Panc1 (cell line): ENCODE measurements at regions of chr9 and their contacts with region 1.

Region 1: GRCh38 chr9:21789541-21790037 is 12.8 kb upstream of the MTAP start:
- DNase-seq: peak; percentile 75
- ATAC-seq: peak; percentile 99
- H3K4me3 ChIP-seq: peak overlapping the region; percentile 18 to 23; a peak in 3 of 4 replicates
- H3K27ac ChIP-seq: peak overlapping the region; percentile 86
- H3K4me1 ChIP-seq: peaks cover 11% of the 10 kb centered on the region
- H3K27me3 ChIP-seq: no peaks in the 10 kb centered on the region
- CTCF ChIP-seq: peak; percentile 72; the same call in 1 of the 2 replicates

Region 2: DNA sequence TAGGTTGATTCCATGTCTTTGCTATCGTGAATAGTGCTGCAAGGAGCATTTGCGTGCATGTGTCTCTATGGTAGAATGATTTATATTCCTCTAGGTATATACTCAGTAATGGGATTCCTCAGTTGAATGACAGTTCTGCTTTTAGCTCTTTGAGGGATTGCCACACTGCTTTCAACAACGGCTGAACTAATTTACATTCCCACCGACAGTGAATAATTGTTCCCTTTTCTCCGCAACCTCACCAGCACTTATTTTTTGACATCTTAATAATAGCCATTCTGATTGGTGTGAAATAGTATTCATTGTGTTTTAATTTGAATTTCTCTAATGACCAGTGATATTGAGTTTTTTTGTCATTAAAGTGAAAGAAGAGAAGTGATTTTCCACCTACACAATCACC is 502.9 kb before region 1 on chr9:
- CTCF ChIA-PET with region 1: no interaction called
- POLR2A ChIA-PET with region 1: no interaction called
- in situ Hi-C with region 1: no loop called
- intact Hi-C with region 1: no loop called
- DNase-seq: no peak
- ATAC-seq: no peak
- H3K4me3 ChIP-seq: no peak overlapping the region
- H3K27ac ChIP-seq: no peak overlapping the region
- H3K4me1 ChIP-seq: no peaks in the 10 kb centered on the region
- H3K27me3 ChIP-seq: no peaks in the 10 kb centered on the region
- CTCF ChIP-seq: no peak

Region 3: GRCh38 chr9:21317956-21318923 is 471.3 kb before region 1 on chr9:
- CTCF ChIA-PET with region 1: interaction called, 8 read pairs
- POLR2A ChIA-PET with region 1: no interaction called
- in situ Hi-C with region 1: no loop called
- intact Hi-C with region 1: loop called (anchors 10 kb)
- DNase-seq: no peak
- ATAC-seq: no peak
- H3K4me3 ChIP-seq: no peak overlapping the region
- H3K27ac ChIP-seq: no peak overlapping the region
- H3K4me1 ChIP-seq: no peaks in the 10 kb centered on the region
- H3K27me3 ChIP-seq: no peaks in the 10 kb centered on the region
- CTCF ChIP-seq: peak; percentile 36; the same call in 1 of the 2 replicates

Region 4: DNA sequence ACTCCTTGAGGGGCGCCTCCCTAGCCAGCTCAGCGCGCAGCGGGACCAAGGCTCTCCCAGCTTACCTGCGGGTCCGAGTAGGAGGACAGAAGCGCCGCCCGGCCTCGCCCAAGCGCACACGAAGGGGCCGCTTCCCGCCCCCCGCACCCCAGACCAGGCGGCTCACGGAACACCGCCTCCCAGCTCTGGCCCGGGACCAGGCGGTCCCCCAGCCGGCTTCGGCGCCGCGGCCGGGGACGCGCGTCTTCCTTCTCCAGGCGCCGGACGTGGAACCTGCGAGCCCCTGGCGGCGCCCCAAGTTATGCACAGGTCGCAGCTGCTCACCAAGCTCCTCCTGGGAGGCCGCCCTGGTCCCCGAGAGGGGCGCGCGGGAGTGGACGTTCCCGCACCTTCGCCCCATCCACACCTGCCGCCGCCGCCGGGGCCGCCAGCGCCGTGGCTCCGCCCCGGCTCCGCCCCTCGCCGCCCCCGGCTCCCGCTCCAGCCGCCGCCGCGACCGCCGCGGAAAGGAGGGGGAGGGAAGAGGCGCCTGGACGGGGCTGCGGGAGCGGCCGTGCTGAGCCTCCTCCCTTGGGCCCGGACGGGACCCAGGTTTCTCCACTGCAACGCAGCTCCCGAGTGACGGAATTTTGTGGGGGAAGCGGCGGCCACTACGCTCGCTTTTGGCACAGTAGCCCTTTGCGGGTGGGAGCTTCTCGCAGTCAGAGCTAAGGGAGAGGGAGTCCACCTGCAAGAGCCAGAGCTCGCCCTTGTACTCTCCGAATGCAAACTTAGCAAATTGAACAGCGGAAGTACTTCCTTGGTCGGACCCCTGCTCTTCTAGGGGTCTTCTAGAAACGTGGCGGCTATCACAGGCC is 229.9 kb before region 1 on chr9:
- CTCF ChIA-PET with region 1: no interaction called
- POLR2A ChIA-PET with region 1: no interaction called
- in situ Hi-C with region 1: no loop called
- intact Hi-C with region 1: loop called (anchors 1 kb)
- DNase-seq: no peak
- ATAC-seq: peak; percentile 91
- H3K4me3 ChIP-seq: peak overlapping the region; percentile 74 to 76
- H3K27ac ChIP-seq: peak overlapping the region; percentile 99
- H3K4me1 ChIP-seq: peaks cover 43% of the 10 kb centered on the region
- H3K27me3 ChIP-seq: no peaks in the 10 kb centered on the region
- CTCF ChIP-seq: peak; percentile 23; the same call in 1 of the 2 replicates

Region 5: GRCh38 chr9:21585756-21586752 is 203.5 kb before region 1 on chr9:
- CTCF ChIA-PET with region 1: no interaction called
- POLR2A ChIA-PET with region 1: no interaction called
- in situ Hi-C with region 1: no loop called
- intact Hi-C with region 1: loop called (anchors 2 kb)
- DNase-seq: no peak
- ATAC-seq: no peak
- H3K4me3 ChIP-seq: no peak overlapping the region
- H3K27ac ChIP-seq: peak overlapping the region; percentile 100
- H3K4me1 ChIP-seq: peaks cover 92% of the 10 kb centered on the region
- H3K27me3 ChIP-seq: no peaks in the 10 kb centered on the region
- CTCF ChIP-seq: peak; percentile 64

Region 6: GRCh38 chr9:21688108-21689102 is 101.2 kb before region 1 on chr9:
- CTCF ChIA-PET with region 1: interaction called, 3 read pairs
- POLR2A ChIA-PET with region 1: no interaction called
- in situ Hi-C with region 1: no loop called
- intact Hi-C with region 1: loop called (anchors 10 kb)
- DNase-seq: peak; percentile 75
- ATAC-seq: peak; percentile 31
- H3K4me3 ChIP-seq: peak overlapping the region; percentile 29 to 36
- H3K27ac ChIP-seq: peak overlapping the region; percentile 95
- H3K4me1 ChIP-seq: peaks cover 76% of the 10 kb centered on the region
- H3K27me3 ChIP-seq: no peaks in the 10 kb centered on the region
- CTCF ChIP-seq: no peak

Region 7: GRCh38 chr9:21709464-21710058 is 80.0 kb before region 1 on chr9:
- CTCF ChIA-PET with region 1: interaction called, 3 read pairs
- POLR2A ChIA-PET with region 1: no interaction called
- in situ Hi-C with region 1: no loop called
- intact Hi-C with region 1: loop called (anchors 5 kb)
- DNase-seq: no peak
- ATAC-seq: no peak
- H3K4me3 ChIP-seq: no peak overlapping the region
- H3K27ac ChIP-seq: peak overlapping the region; percentile 67
- H3K4me1 ChIP-seq: peaks cover 27% of the 10 kb centered on the region
- H3K27me3 ChIP-seq: no peaks in the 10 kb centered on the region
- CTCF ChIP-seq: peak; percentile 71